Activated T-helper 1 cell treated with anti-CD3 and anti-CD28 coated beads, Interleukin-12 subunit alpha, Interleukin-12 subunit beta, Interleukin-2, Interleukin-4 antibody, amounts not matched to agents 30 ng/mL and 10 ng/mL and 1 ng/mL, durations not matched to agents 14 hours and 24 hours and 36 hours (primary cell): ENCODE measurements at regions of chr3 and their contacts with region 1.

Region 1: GRCh38 chr3:151838583-151839312 is 24.8 kb downstream of the AADAC start:
- DNase-seq: no peak
- H3K4me3 Mint-ChIP-seq: no peak overlapping the region
- H3K27ac Mint-ChIP-seq: no peak overlapping the region
- H3K4me1 Mint-ChIP-seq: peaks cover 6% of the 10 kb centered on the region
- H3K27me3 Mint-ChIP-seq: peaks cover 23% of the 10 kb centered on the region

Region 2: GRCh38 chr3:150925751-150926201 is 913.0 kb before region 1 on chr3:
- intact Hi-C with region 1: loop called (anchors 10 kb)
- DNase-seq: peak; percentile 27
- H3K4me3 Mint-ChIP-seq: peak overlapping the region; percentile 48
- H3K27ac Mint-ChIP-seq: no peak overlapping the region
- H3K4me1 Mint-ChIP-seq: peaks cover 9% of the 10 kb centered on the region
- H3K27me3 Mint-ChIP-seq: peaks cover 20% of the 10 kb centered on the region

Region 3: GRCh38 chr3:151227807-151228665 is 610.7 kb before region 1 on chr3:
- intact Hi-C with region 1: loop called (anchors 1 kb)
- DNase-seq: peak; percentile 75
- H3K4me3 Mint-ChIP-seq: peak overlapping the region; percentile 27
- H3K27ac Mint-ChIP-seq: peak overlapping the region; percentile 82
- H3K4me1 Mint-ChIP-seq: peaks cover 61% of the 10 kb centered on the region
- H3K27me3 Mint-ChIP-seq: no peaks in the 10 kb centered on the region

Region 4: DNA sequence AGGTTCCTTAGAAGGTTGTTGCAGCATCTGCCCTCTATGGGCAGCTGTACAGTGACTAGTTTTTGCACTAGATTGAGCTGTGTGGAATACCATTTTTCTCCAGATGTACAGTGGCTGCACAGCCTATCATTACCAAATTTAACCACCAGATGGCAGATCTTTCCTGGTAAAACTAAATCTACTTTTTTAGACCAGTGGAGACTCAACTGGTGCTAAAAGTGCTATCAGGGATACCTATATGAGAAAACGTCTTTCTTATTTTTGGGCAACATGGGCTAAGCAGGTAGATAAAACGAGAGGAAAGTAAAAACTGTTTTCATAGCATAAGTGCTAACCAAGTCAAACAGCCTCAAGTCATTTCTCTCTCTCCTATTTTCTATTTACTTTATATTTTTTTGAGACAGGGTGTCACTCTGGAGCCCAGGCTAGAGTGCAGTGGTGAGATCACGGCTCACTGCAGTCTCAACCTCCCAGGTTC is 399.1 kb before region 1 on chr3:
- intact Hi-C with region 1: loop called (anchors 1 kb)
- DNase-seq: no peak
- H3K4me3 Mint-ChIP-seq: no peak overlapping the region
- H3K27ac Mint-ChIP-seq: no peak overlapping the region
- H3K4me1 Mint-ChIP-seq: no peaks in the 10 kb centered on the region
- H3K27me3 Mint-ChIP-seq: peaks cover 3% of the 10 kb centered on the region

Region 5: GRCh38 chr3:151871639-151872468 is 33.1 kb after region 1 on chr3:
- intact Hi-C with region 1: no loop called
- DNase-seq: no peak
- H3K4me3 Mint-ChIP-seq: no peak overlapping the region
- H3K27ac Mint-ChIP-seq: peak overlapping the region; percentile 12
- H3K4me1 Mint-ChIP-seq: peaks cover 19% of the 10 kb centered on the region
- H3K27me3 Mint-ChIP-seq: peaks cover 8% of the 10 kb centered on the region

Region 6: DNA sequence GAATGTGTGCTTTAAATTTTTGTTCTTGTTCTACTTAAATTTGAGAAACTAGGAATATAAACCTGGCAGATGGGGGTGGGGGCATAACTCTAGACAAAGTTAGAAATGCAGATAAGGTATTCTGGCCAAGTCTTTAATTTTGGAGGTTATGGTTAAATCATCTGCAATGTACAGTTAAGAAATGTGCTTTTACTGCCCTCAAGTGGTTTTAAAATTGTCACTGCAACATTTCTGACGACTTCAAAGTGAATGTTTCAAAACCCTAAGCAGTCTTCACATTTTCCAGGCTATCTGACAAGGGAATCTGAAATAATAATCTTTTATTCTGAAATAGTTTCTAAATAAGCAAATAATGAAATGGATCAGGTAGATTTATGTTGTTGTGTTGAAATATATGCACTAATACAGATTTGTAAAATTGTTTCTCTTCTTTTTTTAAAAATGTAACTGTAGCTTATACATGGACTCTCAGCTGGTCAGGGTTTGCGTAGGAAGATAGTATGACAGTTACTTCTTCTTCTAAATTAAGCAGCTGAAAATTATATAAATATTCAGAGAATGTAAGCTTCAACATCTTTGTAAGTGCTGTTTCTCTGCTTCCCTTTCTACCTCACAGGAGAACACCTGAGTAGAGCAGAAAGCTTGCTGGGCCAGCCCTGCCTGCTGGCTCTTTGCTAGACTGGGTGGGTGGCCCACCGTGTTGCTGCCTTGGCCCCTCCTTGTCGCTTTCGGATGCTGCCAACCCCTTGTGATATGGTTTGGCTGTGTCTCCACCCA is 79.7 kb after region 1 on chr3:
- intact Hi-C with region 1: loop called (anchors 2 kb)
- DNase-seq: no peak
- H3K4me3 Mint-ChIP-seq: no peak overlapping the region
- H3K27ac Mint-ChIP-seq: no peak overlapping the region
- H3K4me1 Mint-ChIP-seq: no peaks in the 10 kb centered on the region
- H3K27me3 Mint-ChIP-seq: peaks cover 5% of the 10 kb centered on the region